ENCODE measurements at regions of chr16 and their contacts with region 1.

Region 1: GRCh38 chr16:57300387-57301125 is 16.1 kb upstream of the PLLP start:
- DNase-seq: peak; percentile 98 to 100 (median 99)
- H3K4me3 ChIP-seq: peak overlapping the region in 2 of 4 donors; percentile 17 to 42
- H3K27ac ChIP-seq: peak overlapping the region; percentile 71 to 91 (median 84)
- H3K4me1 ChIP-seq: peaks cover 3 to 13% of the 10 kb centered on the region in 2 donors
- H3K27me3 ChIP-seq: no peaks in the 10 kb centered on the region
- CTCF ChIP-seq: peak; percentile 75 to 100 (median 99)
- POLR2A ChIP-seq: no peak

Region 2: DNA sequence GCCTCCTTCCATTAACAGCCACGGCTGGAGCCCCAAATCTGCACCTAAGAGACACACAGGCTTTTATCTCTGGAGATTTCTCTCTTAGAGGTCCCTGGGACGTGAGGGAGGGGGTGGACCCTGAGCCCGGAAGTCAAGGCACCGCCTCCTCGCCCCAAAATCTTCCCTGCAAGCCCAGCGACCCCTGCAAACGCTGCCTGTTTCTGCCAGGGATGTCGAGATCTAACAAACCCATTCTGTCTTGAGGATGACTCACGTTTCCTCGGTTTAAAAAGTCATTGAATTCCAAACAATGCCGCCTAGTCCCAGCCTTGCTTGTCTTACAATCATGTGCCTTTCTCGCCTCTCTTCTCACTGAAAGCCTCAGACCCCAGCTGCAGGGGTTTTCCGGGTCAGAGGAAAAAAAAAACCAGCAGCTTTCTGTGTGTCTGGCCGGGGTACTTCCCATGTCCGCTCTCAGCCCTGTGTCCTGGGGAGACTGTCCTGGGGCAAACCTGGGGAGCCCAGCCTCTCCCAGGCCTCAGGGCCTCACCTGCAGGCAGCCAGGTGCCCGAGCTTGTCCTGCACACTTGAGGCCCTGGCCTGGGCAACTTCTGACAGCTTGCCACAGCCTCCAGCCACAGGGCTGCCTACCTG is 40.1 kb before region 1 on chr16:
- intact Hi-C with region 1: no loop called
- DNase-seq: peak in 3 of 7 donors; percentile 30 to 54 (median 33)
- H3K4me3 ChIP-seq: no peak overlapping the region
- H3K27ac ChIP-seq: peak overlapping the region in 2 of 5 donors; percentile 45 to 54
- H3K4me1 ChIP-seq: no peaks in the 10 kb centered on the region
- H3K27me3 ChIP-seq: no peaks in the 10 kb centered on the region
- CTCF ChIP-seq: no peak
- POLR2A ChIP-seq: no peak

Region 3: DNA sequence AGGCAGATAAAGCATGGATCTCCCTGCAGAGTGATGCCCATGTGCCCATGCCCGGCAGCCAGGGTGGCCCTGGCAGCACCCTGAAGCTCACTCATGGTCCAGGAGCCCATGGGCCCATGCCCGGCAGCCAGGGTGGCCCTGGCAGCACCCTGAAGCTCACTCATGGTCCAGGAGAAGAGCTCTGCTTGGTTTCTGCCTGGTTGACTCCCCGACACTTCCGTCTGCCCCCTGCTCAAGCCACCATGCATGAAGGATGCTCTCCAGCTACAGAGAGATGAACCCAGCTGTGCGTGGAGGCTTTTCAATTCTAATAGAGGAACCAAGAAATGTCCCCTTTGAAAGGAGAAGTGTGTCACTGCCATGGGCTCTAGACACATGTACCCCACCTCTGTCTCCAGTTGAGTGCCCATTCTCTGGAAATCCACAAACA is 112.8 kb after region 1 on chr16:
- intact Hi-C with region 1: loop called (anchors 2 kb)
- DNase-seq: no peak
- H3K4me3 ChIP-seq: no peak overlapping the region
- H3K27ac ChIP-seq: no peak overlapping the region
- H3K4me1 ChIP-seq: peaks cover 0 to 13% of the 10 kb centered on the region in 2 donors
- H3K27me3 ChIP-seq: no peaks in the 10 kb centered on the region
- CTCF ChIP-seq: no peak
- POLR2A ChIP-seq: no peak

Region 4: GRCh38 chr16:57419506-57419905 is 119.0 kb after region 1 on chr16:
- intact Hi-C with region 1: loop called (anchors 2 kb)
- DNase-seq: no peak
- H3K4me3 ChIP-seq: no peak overlapping the region
- H3K27ac ChIP-seq: peak overlapping the region in 2 of 5 donors; percentile 9 to 34
- H3K4me1 ChIP-seq: peaks cover 0 to 22% of the 10 kb centered on the region in 2 donors
- H3K27me3 ChIP-seq: no peaks in the 10 kb centered on the region
- CTCF ChIP-seq: no peak
- POLR2A ChIP-seq: no peak

Measured in adrenal gland (tissue), 19 donors.